HCT116 (cell line): ENCODE measurements at regions of chr9 and their contacts with region 1.

Region 1: DNA sequence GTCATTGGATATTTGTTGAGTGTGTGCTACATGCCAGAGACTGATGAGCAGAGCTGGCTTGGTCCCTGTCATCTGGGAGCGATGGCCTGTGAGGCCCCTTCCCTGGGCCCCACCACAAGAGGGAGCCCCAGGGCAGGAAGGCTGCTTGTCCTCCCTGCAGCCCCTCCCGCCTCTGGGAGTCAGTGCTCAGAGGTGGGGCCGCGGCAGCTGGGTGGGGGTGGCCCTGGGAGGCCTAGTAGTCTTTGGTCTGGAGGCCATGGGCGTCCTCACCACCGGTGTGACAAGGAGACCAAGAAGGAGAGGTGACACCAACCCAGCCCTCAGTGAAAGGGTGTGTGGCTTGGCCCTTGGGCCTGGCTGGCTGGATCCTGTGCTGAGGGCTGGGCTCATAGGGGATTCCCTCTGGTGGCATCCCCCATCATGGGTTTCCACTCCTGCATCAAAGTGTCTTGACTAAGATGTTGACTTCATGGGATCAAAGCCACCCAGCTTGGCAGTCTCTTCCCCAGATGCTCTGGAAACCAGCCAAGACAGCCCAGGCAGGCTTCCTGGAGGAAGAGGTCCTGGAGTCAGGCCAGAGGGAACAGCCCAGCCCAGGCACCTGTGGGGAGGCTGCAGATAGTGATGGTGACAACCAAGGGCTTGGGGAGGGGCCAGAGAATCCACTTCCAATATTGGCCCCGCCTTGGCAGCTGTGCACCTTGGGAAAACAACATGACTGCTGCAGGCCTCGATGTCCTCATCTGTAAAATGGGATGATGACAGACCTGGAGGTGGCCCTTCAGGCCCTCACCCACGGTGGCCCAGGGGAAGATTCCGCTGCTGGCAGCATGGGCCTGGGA is 166.7 kb downstream of the GAPVD1 start:
- DNase-seq: peak; percentile 28
- ATAC-seq: peak; percentile 84
- H3K4me3 ChIP-seq: peak overlapping the region; percentile 23 to 51
- H3K27ac ChIP-seq: peak overlapping the region; percentile 37
- H3K4me1 ChIP-seq: peaks cover 7 to 25% of the 10 kb centered on the region in 2 experiments; a peak in 3 of 4 replicates
- H3K27me3 ChIP-seq: no peaks in the 10 kb centered on the region
- CTCF ChIP-seq: peak; percentile 83 to 93 (median 88)
- POLR2A ChIP-seq: no peak
- RAD21 ChIP-seq: peak; percentile 93

Region 2: GRCh38 chr9:125631391-125632085 is 203.3 kb after region 1 on chr9:
- CTCF ChIA-PET with region 1: no interaction called
- POLR2A ChIA-PET with region 1: no interaction called
- RAD21 ChIA-PET with region 1: interaction called in 1 of 2 experiments, 3 read pairs
- intact Hi-C with region 1: loop called (anchors 1 kb)
- DNase-seq: no peak
- ATAC-seq: peak; percentile 75
- H3K4me3 ChIP-seq: no peak overlapping the region
- H3K27ac ChIP-seq: no peak overlapping the region
- H3K4me1 ChIP-seq: peaks cover 25 to 49% of the 10 kb centered on the region in 2 experiments
- H3K27me3 ChIP-seq: no peaks in the 10 kb centered on the region
- CTCF ChIP-seq: peak; percentile 50 to 70 (median 58); a peak in 5 of 6 replicates
- POLR2A ChIP-seq: no peak
- RAD21 ChIP-seq: peak; percentile 75

Region 3: DNA sequence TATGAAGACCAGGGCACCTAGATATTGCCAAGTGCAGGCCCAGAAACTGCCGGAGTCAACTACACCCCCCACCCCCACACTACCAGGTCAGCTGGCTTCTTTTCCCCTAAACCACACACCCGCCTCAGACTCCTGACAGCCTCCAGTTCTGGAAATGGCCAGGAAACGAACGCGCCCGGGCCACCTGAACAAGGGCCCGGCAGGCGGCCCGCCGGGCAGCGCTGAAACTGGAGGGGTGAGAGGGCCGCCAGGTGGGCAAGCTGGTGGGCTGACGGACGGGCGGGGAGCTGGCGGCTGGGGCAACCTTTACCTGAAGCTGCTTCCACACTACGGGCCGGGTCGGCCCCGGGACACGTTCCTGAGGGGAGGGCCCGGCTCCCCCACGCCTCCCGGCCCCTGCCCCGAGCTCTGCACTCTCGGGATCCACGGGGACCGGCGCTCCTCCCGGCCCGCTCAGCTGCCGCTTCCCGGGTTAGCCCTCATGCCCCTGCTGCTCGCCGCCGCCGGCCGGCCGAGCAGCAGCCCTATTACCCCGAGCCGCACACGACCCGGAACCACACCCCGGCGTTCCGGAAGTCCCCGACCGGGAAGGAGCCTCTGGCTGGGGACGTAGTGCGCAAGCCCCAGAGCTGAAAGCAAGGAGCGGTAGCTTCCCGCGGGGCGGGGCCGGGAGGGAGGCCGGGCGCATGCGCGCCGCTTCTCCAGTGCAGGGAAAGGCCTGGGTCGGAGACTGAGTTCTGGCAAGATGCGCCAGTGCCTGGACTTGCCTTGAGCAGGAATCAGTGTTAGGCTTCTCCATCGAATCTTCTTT is 278.6 kb after region 1 on chr9 and contains the start of gene MAPKAP1:
- CTCF ChIA-PET with region 1: no interaction called
- POLR2A ChIA-PET with region 1: no interaction called
- RAD21 ChIA-PET with region 1: no interaction called
- intact Hi-C with region 1: no loop called
- DNase-seq: peak; percentile 85
- ATAC-seq: peak; percentile 99
- H3K4me3 ChIP-seq: peak within 1 kb of the TSS; percentile 71 to 91
- H3K27ac ChIP-seq: peak within 1 kb of the TSS; percentile 58
- H3K4me1 ChIP-seq: peaks cover 11 to 17% of the 10 kb centered on the region in 2 experiments; a peak in 3 of 4 replicates
- H3K27me3 ChIP-seq: no peaks in the 10 kb centered on the region
- CTCF ChIP-seq: no peak
- POLR2A ChIP-seq: peak; percentile 90
- RAD21 ChIP-seq: no peak
- total RNA-seq, gene MAPKAP1: 72.5 TPM